Ascending aorta (tissue), 2 donors: ENCODE measurements at regions of chr2 and their contacts with region 1.

Region 1: GRCh38 chr2:217993817-217994463 is 8.9 kb downstream of the TNS1 start:
- DNase-seq: peak in 1 of 2 donors; percentile 88
- H3K4me3 ChIP-seq: peak overlapping the region in 1 of 2 donors; percentile 3
- H3K27ac ChIP-seq: peak overlapping the region; percentile 59 to 69
- H3K4me1 ChIP-seq: peaks cover 21 to 50% of the 10 kb centered on the region in 2 donors
- H3K27me3 ChIP-seq: no peaks in the 10 kb centered on the region
- CTCF ChIP-seq: peak; percentile 48 to 80 (median 76)

Region 2: GRCh38 chr2:218010140-218010983 is 16.4 kb after region 1 on chr2:
- intact Hi-C with region 1: loop called (anchors 2 kb)
- DNase-seq: peak in 1 of 2 donors; percentile 77
- H3K4me3 ChIP-seq: peak overlapping the region; percentile 71 to 82
- H3K27ac ChIP-seq: peak overlapping the region; percentile 32 to 33
- H3K4me1 ChIP-seq: peaks cover 0 to 27% of the 10 kb centered on the region in 2 donors
- H3K27me3 ChIP-seq: no peaks in the 10 kb centered on the region
- CTCF ChIP-seq: peak; percentile 67 to 86 (median 73)

Region 3: DNA sequence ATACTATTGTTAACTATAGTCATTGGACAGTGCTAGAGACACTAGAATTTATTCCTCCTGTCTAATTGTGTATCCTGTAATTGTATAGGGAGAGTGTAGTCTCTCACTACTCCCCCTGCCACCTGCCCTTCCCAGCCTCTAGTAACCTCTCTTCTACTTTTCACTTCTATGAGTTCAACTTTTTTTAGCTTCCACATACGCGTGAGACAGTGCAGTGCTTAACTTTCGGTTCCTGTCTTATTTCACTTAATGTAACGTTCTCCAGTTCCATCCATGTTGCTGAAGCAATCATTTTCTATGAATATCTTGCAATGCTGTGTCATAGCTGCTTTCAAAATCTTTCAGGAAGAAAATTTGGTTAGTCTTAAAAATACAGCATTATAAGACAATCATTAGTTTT is 52.3 kb after region 1 on chr2:
- intact Hi-C with region 1: no loop called
- DNase-seq: no peak
- H3K4me3 ChIP-seq: no peak overlapping the region
- H3K27ac ChIP-seq: no peak overlapping the region
- H3K4me1 ChIP-seq: no peaks in the 10 kb centered on the region
- H3K27me3 ChIP-seq: no peaks in the 10 kb centered on the region
- CTCF ChIP-seq: no peak